PC-9 (cell line): ENCODE measurements at regions of chr5 and their contacts with region 1.

Region 1: GRCh38 chr5:55172051-55172899 is 702 bp downstream of the CDC20B start:
- DNase-seq: peak; percentile 48 to 76
- H3K4me3 ChIP-seq: peak overlapping the region; percentile 54
- H3K27ac ChIP-seq: no peak overlapping the region
- H3K4me1 ChIP-seq: peaks cover 20% of the 10 kb centered on the region
- H3K27me3 ChIP-seq: no peaks in the 10 kb centered on the region
- CTCF ChIP-seq: peak; percentile 90

Region 2: GRCh38 chr5:55062039-55062779 is 110.1 kb before region 1 on chr5:
- CTCF ChIA-PET with region 1: no interaction called
- POLR2A ChIA-PET with region 1: no interaction called
- intact Hi-C with region 1: no loop called
- DNase-seq: no peak
- H3K4me3 ChIP-seq: no peak overlapping the region
- H3K27ac ChIP-seq: no peak overlapping the region
- H3K4me1 ChIP-seq: no peaks in the 10 kb centered on the region
- H3K27me3 ChIP-seq: 0 out of 2 replicates have a peak, but pooled peaks cover 7% of the 10 kb centered on the region
- CTCF ChIP-seq: no peak

Region 3: GRCh38 chr5:55205001-55205400 is 32.7 kb after region 1 on chr5:
- CTCF ChIA-PET with region 1: no interaction called
- POLR2A ChIA-PET with region 1: no interaction called
- intact Hi-C with region 1: no loop called
- DNase-seq: no peak
- H3K4me3 ChIP-seq: no peak overlapping the region
- H3K27ac ChIP-seq: no peak overlapping the region
- H3K4me1 ChIP-seq: no peaks in the 10 kb centered on the region
- H3K27me3 ChIP-seq: no peaks in the 10 kb centered on the region
- CTCF ChIP-seq: no peak

Region 4: GRCh38 chr5:55226027-55226933 is 54.0 kb after region 1 on chr5:
- CTCF ChIA-PET with region 1: no interaction called
- POLR2A ChIA-PET with region 1: no interaction called
- intact Hi-C with region 1: loop called (anchors 2 kb)
- DNase-seq: peak; percentile 55 to 65
- H3K4me3 ChIP-seq: peak overlapping the region; percentile 80
- H3K27ac ChIP-seq: no peak overlapping the region
- H3K4me1 ChIP-seq: peaks cover 12% of the 10 kb centered on the region
- H3K27me3 ChIP-seq: no peaks in the 10 kb centered on the region
- CTCF ChIP-seq: peak; percentile 80

Region 5: DNA sequence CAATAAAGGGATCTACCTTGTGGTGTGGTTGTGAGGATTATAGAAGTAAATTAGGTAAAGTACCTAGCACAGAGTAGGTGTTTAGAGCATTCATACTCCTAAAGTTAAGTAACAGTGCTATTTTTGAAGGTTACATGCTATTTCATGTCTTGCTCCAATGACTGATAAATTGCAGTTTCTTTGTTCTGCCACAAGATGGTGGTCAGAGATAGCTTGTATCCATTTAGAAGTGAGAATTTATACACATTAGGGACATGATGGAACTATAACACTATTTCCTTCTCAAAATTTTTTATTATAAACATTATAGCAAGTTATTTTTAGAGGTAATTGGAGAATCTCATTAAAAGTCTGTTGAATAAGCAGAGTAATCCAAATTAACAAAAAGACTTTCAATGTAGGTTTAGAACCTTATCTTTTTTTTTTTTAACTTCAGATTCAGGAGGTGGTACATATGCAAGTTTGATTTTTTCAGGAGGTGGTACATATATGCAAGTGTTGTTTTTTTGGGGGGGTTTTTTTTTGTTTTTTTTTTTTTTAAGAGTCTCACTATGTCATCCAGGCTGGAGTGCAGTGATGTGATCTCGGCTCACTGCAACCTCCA is 152.6 kb after region 1 on chr5:
- CTCF ChIA-PET with region 1: no interaction called
- POLR2A ChIA-PET with region 1: no interaction called
- intact Hi-C with region 1: loop called (anchors 5 kb)
- DNase-seq: peak in 1 of 2 experiments; percentile 45
- H3K4me3 ChIP-seq: no peak overlapping the region
- H3K27ac ChIP-seq: no peak overlapping the region
- H3K4me1 ChIP-seq: no peaks in the 10 kb centered on the region
- H3K27me3 ChIP-seq: no peaks in the 10 kb centered on the region
- CTCF ChIP-seq: peak; percentile 68

Region 6: GRCh38 chr5:55456216-55456895 is 284.1 kb after region 1 on chr5:
- CTCF ChIA-PET with region 1: no interaction called
- POLR2A ChIA-PET with region 1: no interaction called
- intact Hi-C with region 1: no loop called
- DNase-seq: no peak
- H3K4me3 ChIP-seq: no peak overlapping the region
- H3K27ac ChIP-seq: 0 out of 2 replicates have a peak overlapping the region, but pooled peaks have one; percentile 12
- H3K4me1 ChIP-seq: peaks cover 10% of the 10 kb centered on the region
- H3K27me3 ChIP-seq: no peaks in the 10 kb centered on the region
- CTCF ChIP-seq: no peak

Region 7: GRCh38 chr5:55691265-55692105 is 519.2 kb after region 1 on chr5:
- CTCF ChIA-PET with region 1: interaction called, 3 read pairs
- POLR2A ChIA-PET with region 1: no interaction called
- intact Hi-C with region 1: loop called (anchors 2 kb)
- DNase-seq: peak in 1 of 2 experiments; percentile 51
- H3K4me3 ChIP-seq: no peak overlapping the region
- H3K27ac ChIP-seq: no peak overlapping the region
- H3K4me1 ChIP-seq: no peaks in the 10 kb centered on the region
- H3K27me3 ChIP-seq: no peaks in the 10 kb centered on the region
- CTCF ChIP-seq: peak; percentile 80

Region 8: GRCh38 chr5:55936100-55936693 is 763.9 kb after region 1 on chr5:
- CTCF ChIA-PET with region 1: interaction called, 4 read pairs
- POLR2A ChIA-PET with region 1: no interaction called
- intact Hi-C with region 1: loop called (anchors 5 kb)
- DNase-seq: peak; percentile 71 to 73
- H3K4me3 ChIP-seq: no peak overlapping the region
- H3K27ac ChIP-seq: no peak overlapping the region
- H3K4me1 ChIP-seq: peaks cover 23% of the 10 kb centered on the region
- H3K27me3 ChIP-seq: no peaks in the 10 kb centered on the region
- CTCF ChIP-seq: peak; percentile 86